ENCODE measurements at regions of chr3 and their contacts with region 1.

Region 1: DNA sequence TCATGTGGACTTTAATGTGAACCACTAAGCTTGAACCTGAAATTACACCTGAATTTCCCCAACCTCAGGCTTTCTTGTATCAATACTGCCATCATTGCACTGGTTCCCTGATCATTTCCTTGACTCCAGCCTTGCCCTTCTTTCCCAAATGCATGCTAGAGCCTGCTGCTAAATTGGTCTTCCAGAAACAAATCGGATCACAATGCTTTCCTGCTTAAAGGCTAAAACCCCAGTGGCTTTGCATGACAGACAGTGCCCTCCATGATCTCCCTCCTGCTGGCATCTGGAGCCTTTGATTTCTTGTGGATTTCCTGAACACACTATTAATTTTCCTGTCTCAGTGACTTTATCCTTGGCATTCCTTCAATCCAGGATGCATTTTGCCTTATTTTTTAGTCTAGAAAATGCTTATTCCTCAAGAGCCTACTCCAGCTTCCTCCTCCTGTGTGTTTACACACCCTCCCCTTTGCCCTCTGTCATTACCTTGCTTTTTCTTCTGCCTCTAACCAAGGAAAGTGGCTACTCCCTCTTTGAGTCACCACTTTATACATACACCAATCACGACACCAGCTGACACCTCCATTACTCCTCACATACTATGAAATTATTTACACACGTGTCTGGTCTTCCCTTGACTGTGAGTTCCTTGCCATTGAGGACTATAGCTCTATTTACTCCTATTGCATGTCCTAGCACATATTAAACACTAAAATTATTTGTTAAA is 214.6 kb downstream of the KCNAB1 start:
- DNase-seq: peak; percentile 6
- H3K4me3 ChIP-seq: no peak overlapping the region
- H3K27ac ChIP-seq: no peak overlapping the region
- H3K4me1 ChIP-seq: no peaks in the 10 kb centered on the region
- H3K27me3 ChIP-seq: no peaks in the 10 kb centered on the region
- CTCF ChIP-seq: no peak

Region 2: DNA sequence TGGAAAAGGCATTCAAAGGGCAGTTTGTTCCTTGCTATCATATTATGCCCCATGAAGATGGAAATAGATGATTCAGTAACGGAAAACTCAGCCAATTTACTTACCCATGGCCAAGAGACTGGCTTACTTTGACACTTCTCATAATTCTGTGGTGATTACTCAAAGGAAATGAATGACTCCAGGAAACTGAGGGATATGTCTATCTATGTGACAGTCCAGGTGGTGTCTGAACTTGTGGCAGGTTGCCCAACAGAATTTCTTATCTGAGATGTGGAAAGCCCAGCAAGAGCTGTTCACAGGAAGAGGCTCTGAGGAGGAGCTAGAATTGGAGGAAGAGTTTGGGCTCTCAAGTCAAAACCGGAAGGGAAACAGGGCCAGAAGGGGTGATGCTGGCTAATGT is 123.4 kb before region 1 on chr3:
- CTCF ChIA-PET with region 1: no interaction called
- dilution Hi-C with region 1: no loop called
- in situ Hi-C with region 1: no loop called
- intact Hi-C with region 1: loop called (anchors 5 kb)
- DNase-seq: peak; percentile 89
- H3K4me3 ChIP-seq: no peak overlapping the region
- H3K27ac ChIP-seq: no peak overlapping the region
- H3K4me1 ChIP-seq: peaks cover 11% of the 10 kb centered on the region
- H3K27me3 ChIP-seq: no peaks in the 10 kb centered on the region
- CTCF ChIP-seq: no peak

Region 3: GRCh38 chr3:156264771-156265170 is 70.2 kb before region 1 on chr3:
- CTCF ChIA-PET with region 1: no interaction called
- dilution Hi-C with region 1: loop called (anchors 5 kb)
- in situ Hi-C with region 1: no loop called
- intact Hi-C with region 1: no loop called
- DNase-seq: no peak
- H3K4me3 ChIP-seq: no peak overlapping the region
- H3K27ac ChIP-seq: no peak overlapping the region
- H3K4me1 ChIP-seq: no peaks in the 10 kb centered on the region
- H3K27me3 ChIP-seq: no peaks in the 10 kb centered on the region
- CTCF ChIP-seq: no peak

Region 4: GRCh38 chr3:156368189-156368588 is 33.2 kb after region 1 on chr3:
- CTCF ChIA-PET with region 1: no interaction called
- dilution Hi-C with region 1: no loop called
- in situ Hi-C with region 1: no loop called
- intact Hi-C with region 1: no loop called
- DNase-seq: no peak
- H3K4me3 ChIP-seq: no peak overlapping the region
- H3K27ac ChIP-seq: no peak overlapping the region
- H3K4me1 ChIP-seq: no peaks in the 10 kb centered on the region
- H3K27me3 ChIP-seq: peaks cover 4% of the 10 kb centered on the region
- CTCF ChIP-seq: no peak

Region 5: DNA sequence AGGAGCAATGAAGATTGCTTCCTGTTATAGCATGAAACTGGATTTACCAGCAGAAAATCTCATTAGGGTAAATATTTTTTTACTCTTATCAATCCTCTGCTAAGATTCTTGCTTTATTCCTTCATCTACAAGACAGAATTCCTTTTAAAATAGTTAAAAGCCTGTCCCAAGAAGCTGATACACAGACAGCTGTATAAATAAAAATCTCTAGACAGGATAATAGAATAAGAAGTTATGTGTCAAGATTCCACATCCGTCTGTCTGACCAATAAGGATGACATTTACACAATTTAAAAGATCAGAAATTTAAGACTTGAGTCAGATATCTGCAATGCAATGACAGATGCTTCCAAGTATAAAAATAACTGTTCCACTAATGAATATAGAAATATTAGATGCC is 162.3 kb after region 1 on chr3:
- CTCF ChIA-PET with region 1: no interaction called
- dilution Hi-C with region 1: no loop called
- in situ Hi-C with region 1: no loop called
- intact Hi-C with region 1: no loop called
- DNase-seq: no peak
- H3K4me3 ChIP-seq: no peak overlapping the region
- H3K27ac ChIP-seq: no peak overlapping the region
- H3K4me1 ChIP-seq: no peaks in the 10 kb centered on the region
- H3K27me3 ChIP-seq: peaks cover 2% of the 10 kb centered on the region
- CTCF ChIP-seq: no peak